GM10248 (cell line): ENCODE measurements at regions of chr6 and their contacts with region 1.

Region 1: GRCh38 chr6:72411872-72412708 is 209.8 kb upstream of the KCNQ5 start:
- DNase-seq: peak; percentile 80
- CTCF ChIP-seq: peak; percentile 100

Region 2: DNA sequence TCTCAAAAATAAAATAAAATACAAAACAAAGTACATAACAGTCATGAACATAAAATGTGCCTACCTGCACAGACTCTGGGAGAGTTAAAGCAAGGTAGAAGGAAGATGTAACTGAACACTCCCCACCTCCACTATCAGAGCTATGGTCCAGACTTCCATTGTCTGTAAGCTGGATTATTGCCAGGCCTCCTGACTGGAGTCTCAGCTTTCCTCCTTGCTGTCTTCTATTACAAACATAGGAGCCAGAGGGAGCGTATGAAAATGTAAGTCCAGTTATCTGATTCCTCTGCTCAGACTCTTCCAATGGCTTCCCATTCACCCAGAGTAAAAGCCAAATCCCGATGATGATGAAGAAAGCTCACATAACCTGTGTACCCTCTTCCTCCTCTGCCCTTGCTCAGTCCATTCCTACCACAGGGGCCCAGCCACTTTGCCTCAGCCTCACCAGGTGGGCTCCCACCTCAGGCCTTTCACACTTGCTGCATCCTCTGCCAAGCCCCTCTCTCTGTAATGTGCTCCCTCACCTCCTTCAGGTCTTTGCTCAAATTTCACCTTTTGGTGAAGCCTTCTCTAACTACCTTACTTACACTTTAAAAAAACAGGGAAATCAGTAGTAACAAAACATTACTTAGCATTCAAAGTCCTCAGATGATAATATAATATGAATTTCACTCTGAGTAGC is 331.7 kb before region 1 on chr6:
- CTCF ChIA-PET with region 1: no interaction called
- POLR2A ChIA-PET with region 1: no interaction called
- DNase-seq: no peak
- CTCF ChIP-seq: no peak

Region 3: DNA sequence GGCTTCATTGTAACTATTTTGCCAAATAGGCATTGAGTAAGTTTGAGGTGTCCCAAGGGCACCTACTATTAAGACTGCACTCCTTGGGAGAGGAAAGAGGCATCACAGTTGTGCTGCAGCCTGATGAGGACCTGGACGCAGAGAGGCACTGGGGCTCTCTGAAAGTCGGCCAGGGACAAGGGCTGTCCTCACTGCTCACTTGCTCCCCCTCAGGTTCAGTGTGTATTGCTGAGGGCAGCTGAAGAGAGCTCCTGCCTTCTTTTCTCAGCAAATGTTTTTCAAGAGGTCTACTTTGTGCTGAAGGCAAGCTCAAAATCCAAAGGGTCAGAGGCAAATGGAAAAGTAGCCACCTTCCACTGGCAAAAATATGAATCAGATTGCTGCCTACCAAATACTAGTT is 194.0 kb before region 1 on chr6:
- CTCF ChIA-PET with region 1: no interaction called
- POLR2A ChIA-PET with region 1: no interaction called
- DNase-seq: peak; percentile 12
- CTCF ChIP-seq: peak; percentile 21

Region 4: GRCh38 chr6:72382602-72383529 is 29.2 kb before region 1 on chr6:
- CTCF ChIA-PET with region 1: interaction called, 14 read pairs
- POLR2A ChIA-PET with region 1: no interaction called
- DNase-seq: peak; percentile 49
- CTCF ChIP-seq: no peak

Region 5: GRCh38 chr6:72401865-72402264 is 10.2 kb before region 1 on chr6:
- CTCF ChIA-PET with region 1: interaction called, 14 read pairs
- POLR2A ChIA-PET with region 1: no interaction called
- DNase-seq: no peak
- CTCF ChIP-seq: no peak

Region 6: DNA sequence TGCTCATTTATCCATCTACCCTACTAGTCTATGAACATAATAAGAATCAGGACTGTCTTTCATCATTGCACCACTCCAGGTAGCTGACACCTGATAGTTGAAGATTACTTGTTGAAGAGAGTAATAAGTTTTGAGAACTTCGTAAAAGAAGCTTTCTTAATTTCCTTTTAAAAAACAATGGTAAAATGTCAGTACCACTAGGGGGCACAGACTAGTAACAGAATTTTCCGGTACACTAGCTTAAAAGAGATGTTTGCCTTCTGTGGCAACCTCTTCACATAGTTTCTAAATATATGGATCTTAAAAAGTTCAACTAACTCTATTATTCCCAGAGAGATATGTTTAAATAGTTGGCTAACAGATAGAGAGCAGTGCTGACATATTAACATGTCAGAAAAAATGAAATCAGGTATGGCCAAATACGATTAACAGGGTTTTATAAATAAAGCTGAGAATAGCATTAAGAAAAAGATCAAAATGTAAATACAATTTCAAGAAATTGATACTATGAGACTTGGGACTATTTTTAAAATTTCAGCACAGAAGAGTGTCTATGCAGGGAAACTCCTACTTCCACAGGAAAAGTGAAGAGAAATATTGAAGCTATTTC is 204.4 kb after region 1 on chr6:
- CTCF ChIA-PET with region 1: interaction called, 19 read pairs
- POLR2A ChIA-PET with region 1: no interaction called
- DNase-seq: peak; percentile 34
- CTCF ChIP-seq: peak; percentile 67

Region 7: DNA sequence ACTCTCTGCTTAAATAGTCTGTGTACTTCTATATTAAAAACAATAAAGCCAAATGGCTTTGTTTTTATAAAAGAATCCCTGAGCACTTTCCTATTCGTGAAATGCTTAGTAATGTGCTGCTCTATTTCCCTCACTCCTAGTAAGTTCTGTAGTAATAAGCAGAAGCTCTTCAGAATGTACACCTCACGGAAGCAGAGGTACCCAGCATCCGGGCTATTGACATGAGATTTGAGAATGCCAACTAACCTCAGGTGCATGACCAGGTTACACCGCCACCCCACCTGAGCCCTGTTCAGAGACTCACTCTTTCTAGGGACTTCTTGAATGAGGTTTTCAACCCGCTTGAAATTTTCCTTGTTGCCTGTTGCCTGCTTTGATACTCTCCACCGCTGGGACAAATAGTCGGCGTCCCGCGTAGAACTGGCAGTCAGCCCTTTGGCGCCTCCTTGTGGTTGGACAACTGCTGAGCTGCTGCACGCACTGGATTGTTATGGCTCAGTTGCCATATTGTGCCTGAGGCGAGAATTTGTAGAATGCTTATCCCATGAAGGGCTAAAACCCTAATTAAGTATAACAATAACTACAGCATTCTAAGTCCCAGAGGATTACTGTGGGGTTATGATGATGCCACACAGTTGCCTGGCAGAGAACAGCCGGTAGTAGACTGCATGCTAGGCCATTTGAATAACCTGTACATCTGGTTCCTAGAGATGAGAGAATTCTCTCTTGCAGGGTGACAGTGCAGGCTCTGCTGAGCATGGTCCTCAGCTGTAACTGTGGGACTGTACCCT is 717.8 kb after region 1 on chr6:
- CTCF ChIA-PET with region 1: interaction called, 197 read pairs
- POLR2A ChIA-PET with region 1: no interaction called
- DNase-seq: peak; percentile 66
- CTCF ChIP-seq: peak; percentile 99

Region 8: GRCh38 chr6:73329201-73329600 is 917.1 kb after region 1 on chr6:
- CTCF ChIA-PET with region 1: interaction called, 52 read pairs
- POLR2A ChIA-PET with region 1: no interaction called
- DNase-seq: no peak
- CTCF ChIP-seq: no peak